ENCODE measurements at regions of chr12 and their contacts with region 1.

Region 1: DNA sequence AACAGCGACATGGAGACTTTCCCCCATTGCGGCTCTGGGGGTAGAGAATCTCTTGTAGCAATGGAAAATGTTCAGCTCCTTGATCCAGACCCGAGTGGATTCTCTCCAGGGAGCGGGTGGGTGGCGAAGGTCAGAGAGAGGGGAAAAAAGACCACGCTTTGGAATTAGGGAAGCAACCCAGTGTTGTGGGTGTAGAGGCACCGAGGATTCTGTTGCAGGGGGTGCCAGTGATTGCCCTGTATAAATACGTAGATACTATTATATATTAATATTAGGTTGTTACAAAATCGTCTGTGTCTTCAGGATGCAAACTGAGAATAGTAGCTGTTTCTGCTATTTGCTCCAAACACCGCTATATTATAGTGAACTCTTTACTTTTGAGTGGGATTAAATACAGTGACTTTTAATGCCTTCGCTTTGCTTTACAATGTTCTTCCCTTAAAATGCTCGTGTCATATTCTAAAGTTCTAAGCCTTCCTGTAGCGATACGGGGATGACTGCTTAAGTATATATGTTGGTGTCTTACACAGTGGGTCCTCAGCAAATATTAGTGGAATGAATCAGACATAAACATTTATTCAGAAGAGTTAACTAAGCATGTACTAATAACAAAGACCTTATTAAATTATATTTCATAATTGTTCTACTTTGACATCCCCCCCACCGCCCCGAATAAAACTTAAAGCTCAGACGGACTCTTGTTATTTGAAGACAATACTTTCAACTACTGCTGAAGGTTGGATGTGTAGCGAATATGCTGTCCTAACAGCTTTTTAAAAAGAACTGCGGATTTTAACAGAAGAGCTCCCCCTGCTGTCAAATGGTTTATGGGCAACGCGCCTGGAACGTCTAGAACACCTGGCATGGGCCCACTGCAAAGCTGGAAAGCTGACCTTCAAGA is 136.4 kb upstream of the KRAS start:
- DNase-seq: peak; percentile 91
- ATAC-seq: peak; percentile 45
- H3K4me3 ChIP-seq: peak overlapping the region; percentile 89
- H3K27ac ChIP-seq: peak overlapping the region; percentile 37
- H3K4me1 ChIP-seq: peaks cover 19% of the 10 kb centered on the region
- H3K27me3 ChIP-seq: no peaks in the 10 kb centered on the region
- CTCF ChIP-seq: peak; percentile 93

Region 2: DNA sequence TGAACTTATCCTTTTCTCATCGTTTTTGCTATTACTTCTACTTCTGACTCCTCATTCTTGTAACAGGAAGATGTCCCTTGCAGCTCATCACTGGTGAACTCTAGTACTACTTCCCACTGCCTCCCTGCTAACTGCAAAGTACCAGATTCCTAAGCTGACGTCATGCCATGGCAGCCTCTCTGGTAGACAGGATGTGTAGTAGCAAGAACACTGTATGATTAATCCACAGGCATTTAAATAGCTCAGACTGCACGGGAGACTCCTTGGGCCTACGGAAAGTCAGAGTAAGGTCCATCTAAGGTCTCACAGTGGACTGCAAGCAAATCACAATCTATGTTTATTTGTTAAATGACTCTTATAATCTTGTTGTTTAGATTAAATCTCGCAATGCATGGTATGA is 235.6 kb before region 1 on chr12:
- CTCF ChIA-PET with region 1: interaction called, 4 read pairs
- POLR2A ChIA-PET with region 1: interaction called, 3 read pairs
- intact Hi-C with region 1: loop called (anchors 1 kb)
- DNase-seq: peak; percentile 51
- ATAC-seq: peak; percentile 66
- H3K4me3 ChIP-seq: no peak overlapping the region
- H3K27ac ChIP-seq: no peak overlapping the region
- H3K4me1 ChIP-seq: no peaks in the 10 kb centered on the region
- H3K27me3 ChIP-seq: no peaks in the 10 kb centered on the region
- CTCF ChIP-seq: no peak

Region 3: DNA sequence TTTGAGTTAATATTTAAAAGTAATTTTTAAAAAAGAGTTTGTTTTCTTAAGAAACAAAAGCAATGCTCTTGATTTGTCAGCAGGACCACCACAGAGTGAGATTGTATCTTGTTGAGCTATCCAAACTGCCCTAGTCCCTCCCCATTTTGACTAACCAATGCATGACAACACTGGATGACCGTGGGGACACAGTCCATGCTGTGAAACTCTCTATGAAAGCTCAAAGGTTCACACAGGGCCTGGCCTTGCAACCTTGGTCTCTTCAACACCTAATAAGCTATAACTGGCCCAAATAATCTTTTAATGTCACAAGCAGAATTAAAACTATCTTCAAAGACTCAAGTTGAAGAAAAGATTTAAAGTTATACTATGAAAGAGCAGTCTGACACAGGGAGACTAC is 178.5 kb before region 1 on chr12:
- CTCF ChIA-PET with region 1: interaction called, 3 read pairs
- POLR2A ChIA-PET with region 1: no interaction called
- intact Hi-C with region 1: loop called (anchors 1 kb)
- DNase-seq: no peak
- ATAC-seq: no peak
- H3K4me3 ChIP-seq: no peak overlapping the region
- H3K27ac ChIP-seq: no peak overlapping the region
- H3K4me1 ChIP-seq: no peaks in the 10 kb centered on the region
- H3K27me3 ChIP-seq: no peaks in the 10 kb centered on the region
- CTCF ChIP-seq: no peak

Region 4: GRCh38 chr12:25241167-25242020 is 145.7 kb before region 1 on chr12:
- CTCF ChIA-PET with region 1: interaction called, 19 read pairs
- POLR2A ChIA-PET with region 1: no interaction called
- intact Hi-C with region 1: loop called (anchors 1 kb)
- DNase-seq: peak; percentile 39
- ATAC-seq: no peak
- H3K4me3 ChIP-seq: no peak overlapping the region
- H3K27ac ChIP-seq: no peak overlapping the region
- H3K4me1 ChIP-seq: no peaks in the 10 kb centered on the region
- H3K27me3 ChIP-seq: no peaks in the 10 kb centered on the region
- CTCF ChIP-seq: peak; percentile 70

Region 5: GRCh38 chr12:25352083-25352918 is 34.8 kb before region 1 on chr12:
- CTCF ChIA-PET with region 1: no interaction called
- POLR2A ChIA-PET with region 1: no interaction called
- intact Hi-C with region 1: no loop called
- DNase-seq: no peak
- ATAC-seq: no peak
- H3K4me3 ChIP-seq: no peak overlapping the region
- H3K27ac ChIP-seq: no peak overlapping the region
- H3K4me1 ChIP-seq: no peaks in the 10 kb centered on the region
- H3K27me3 ChIP-seq: no peaks in the 10 kb centered on the region
- CTCF ChIP-seq: no peak

Region 6: GRCh38 chr12:25404955-25405354 is 17.9 kb after region 1 on chr12:
- CTCF ChIA-PET with region 1: no interaction called
- POLR2A ChIA-PET with region 1: no interaction called
- intact Hi-C with region 1: no loop called
- DNase-seq: no peak
- ATAC-seq: no peak
- H3K4me3 ChIP-seq: no peak overlapping the region
- H3K27ac ChIP-seq: no peak overlapping the region
- H3K4me1 ChIP-seq: no peaks in the 10 kb centered on the region
- H3K27me3 ChIP-seq: no peaks in the 10 kb centered on the region
- CTCF ChIP-seq: no peak

Region 7: GRCh38 chr12:25458047-25458552 is 71.0 kb after region 1 on chr12:
- CTCF ChIA-PET with region 1: no interaction called
- POLR2A ChIA-PET with region 1: no interaction called
- intact Hi-C with region 1: no loop called
- DNase-seq: peak; percentile 93
- ATAC-seq: peak; percentile 95
- H3K4me3 ChIP-seq: peak overlapping the region; percentile 20; the same call in 1 of the 2 replicates
- H3K27ac ChIP-seq: peak overlapping the region; percentile 82
- H3K4me1 ChIP-seq: peaks cover 19% of the 10 kb centered on the region
- H3K27me3 ChIP-seq: no peaks in the 10 kb centered on the region
- CTCF ChIP-seq: no peak

Region 8: DNA sequence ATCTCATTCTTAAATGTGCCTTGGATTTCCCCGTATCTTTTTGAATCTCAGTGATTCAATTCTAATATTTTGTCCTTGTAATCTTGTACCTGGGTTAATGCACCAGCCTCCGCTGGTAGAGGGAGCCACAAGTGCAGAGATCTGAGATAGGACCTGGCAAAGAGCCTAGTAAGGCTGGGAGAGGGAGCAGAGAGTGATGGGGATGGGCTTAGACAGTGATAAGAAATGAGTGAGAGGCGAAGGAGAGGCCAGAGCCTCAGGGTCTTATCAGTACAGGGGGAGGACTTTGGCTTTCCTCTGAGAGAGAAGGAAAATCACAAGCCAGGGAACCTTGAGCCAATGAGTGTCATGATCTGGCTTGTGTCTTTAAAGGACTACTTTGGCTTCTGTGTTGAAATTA is 196.5 kb after region 1 on chr12:
- CTCF ChIA-PET with region 1: no interaction called
- POLR2A ChIA-PET with region 1: no interaction called
- intact Hi-C with region 1: no loop called
- DNase-seq: peak; percentile 46
- ATAC-seq: no peak
- H3K4me3 ChIP-seq: no peak overlapping the region
- H3K27ac ChIP-seq: no peak overlapping the region
- H3K4me1 ChIP-seq: no peaks in the 10 kb centered on the region
- H3K27me3 ChIP-seq: no peaks in the 10 kb centered on the region
- CTCF ChIP-seq: peak; percentile 51